Upper lobe of right lung (tissue), 1 donor: ENCODE measurements at regions of chr19 and their contacts with region 1.

Region 1: GRCh38 chr19:47742634-47743033 is 2.7 kb upstream of the NOP53 start:
- DNase-seq: no peak
- ATAC-seq: no peak
- H3K4me3 ChIP-seq: peak overlapping the region; percentile 51
- H3K27ac ChIP-seq: peak overlapping the region; percentile 92
- H3K4me1 ChIP-seq: peaks cover 35% of the 10 kb centered on the region
- H3K27me3 ChIP-seq: no peaks in the 10 kb centered on the region
- CTCF ChIP-seq: no peak

Region 2: GRCh38 chr19:47713046-47714021 is 29.3 kb before region 1 on chr19 and contains the start of gene EHD2:
- intact Hi-C with region 1: loop called (anchors 2 kb)
- DNase-seq: peak; percentile 86
- ATAC-seq: peak; percentile 98
- H3K4me3 ChIP-seq: peak within 1 kb of the TSS; percentile 66
- H3K27ac ChIP-seq: peak within 1 kb of the TSS; percentile 81
- H3K4me1 ChIP-seq: peaks cover 21% of the 10 kb centered on the region
- H3K27me3 ChIP-seq: no peaks in the 10 kb centered on the region
- CTCF ChIP-seq: peak; percentile 97
- total RNA-seq, gene EHD2: 210 TPM